OCI-LY7 (cell line): ENCODE measurements at regions of chr15 and their contacts with region 1.

Region 1: GRCh38 chr15:99704444-99704838 is 28.8 kb downstream of the LYSMD4 start:
- DNase-seq: peak; percentile 86
- H3K4me3 ChIP-seq: no peak overlapping the region
- H3K27ac ChIP-seq: no peak overlapping the region
- H3K4me1 ChIP-seq: peaks cover 9% of the 10 kb centered on the region
- CTCF ChIP-seq: peak; percentile 94

Region 2: GRCh38 chr15:98941595-98942255 is 762.7 kb before region 1 on chr15:
- CTCF ChIA-PET with region 1: no interaction called
- POLR2A ChIA-PET with region 1: no interaction called
- intact Hi-C with region 1: no loop called
- DNase-seq: no peak
- H3K4me3 ChIP-seq: no peak overlapping the region
- H3K27ac ChIP-seq: no peak overlapping the region
- H3K4me1 ChIP-seq: no peaks in the 10 kb centered on the region
- CTCF ChIP-seq: no peak

Region 3: DNA sequence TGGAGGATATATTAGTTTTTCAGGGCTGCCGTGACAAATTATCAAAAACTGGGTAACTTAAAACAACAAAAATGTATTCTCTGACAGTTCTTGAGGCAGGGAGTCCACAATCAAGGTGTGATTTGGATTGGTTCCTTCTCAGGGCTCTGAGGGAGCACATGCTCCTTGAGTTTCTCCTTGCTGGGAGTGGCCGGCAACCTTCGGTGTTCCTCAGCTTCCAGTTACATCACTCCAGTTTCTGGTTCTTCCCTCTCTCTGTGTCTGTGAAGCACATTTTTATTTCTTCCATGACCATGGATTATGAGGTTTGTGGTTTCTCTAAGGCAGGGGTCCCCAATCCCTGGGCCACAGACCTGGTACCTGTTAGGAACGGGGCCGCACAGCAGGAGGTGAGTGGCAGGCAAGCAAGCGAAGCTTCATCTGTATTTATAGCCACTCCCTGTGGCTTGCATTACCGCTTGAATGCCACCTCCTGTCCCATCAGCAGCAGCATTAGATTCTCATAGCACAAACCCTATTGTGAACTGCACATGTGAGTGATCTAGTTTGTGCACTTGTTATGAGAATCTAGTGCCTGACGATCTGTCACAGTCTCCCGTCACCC is 428.8 kb before region 1 on chr15:
- CTCF ChIA-PET with region 1: interaction called, 9 read pairs
- POLR2A ChIA-PET with region 1: interaction called, 3 read pairs
- intact Hi-C with region 1: loop called (anchors 1 kb)
- DNase-seq: no peak
- H3K4me3 ChIP-seq: no peak overlapping the region
- H3K27ac ChIP-seq: no peak overlapping the region
- H3K4me1 ChIP-seq: no peaks in the 10 kb centered on the region
- CTCF ChIP-seq: no peak

Region 4: DNA sequence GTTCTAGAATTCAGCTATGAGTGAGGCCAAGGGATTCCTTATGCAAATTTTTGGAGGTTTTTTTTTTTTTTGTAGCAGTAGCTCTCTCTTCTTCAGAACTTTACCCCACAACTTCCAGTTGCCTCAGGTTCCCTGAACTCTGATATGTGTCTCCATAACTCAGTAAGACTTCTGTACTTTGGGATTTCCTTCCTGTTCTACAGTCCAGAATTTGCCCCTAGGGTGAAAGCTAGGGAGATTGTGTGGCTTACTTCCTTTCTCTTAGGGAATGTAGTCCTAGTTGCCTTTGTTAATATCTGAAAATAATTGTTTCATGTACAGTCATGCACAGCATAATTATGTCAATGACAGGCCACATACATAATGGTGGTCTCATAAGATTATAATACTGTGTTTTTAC is 422.3 kb before region 1 on chr15:
- CTCF ChIA-PET with region 1: interaction called, 4 read pairs
- POLR2A ChIA-PET with region 1: interaction called, 4 read pairs
- intact Hi-C with region 1: loop called (anchors 2 kb)
- DNase-seq: no peak
- H3K4me3 ChIP-seq: no peak overlapping the region
- H3K27ac ChIP-seq: no peak overlapping the region
- H3K4me1 ChIP-seq: peaks cover 4% of the 10 kb centered on the region
- CTCF ChIP-seq: no peak

Region 5: DNA sequence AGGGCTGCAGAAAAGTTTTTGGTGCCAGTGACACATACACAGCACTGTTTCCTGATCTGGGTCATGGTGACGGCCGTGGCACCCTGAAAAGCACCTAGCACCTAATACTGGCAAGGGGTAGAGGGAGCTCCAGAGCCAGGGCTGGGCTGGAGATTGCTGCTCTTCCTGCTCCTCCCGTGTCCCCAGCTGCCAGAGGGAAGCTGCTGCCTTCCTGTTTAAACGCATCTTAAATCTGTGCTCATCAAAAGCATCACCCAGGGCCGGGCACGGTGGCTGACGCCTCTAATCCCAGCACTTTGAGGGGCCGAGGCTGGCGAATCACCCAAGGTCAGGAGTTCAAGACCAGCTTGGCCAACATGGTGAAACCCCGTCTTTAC is 295.4 kb before region 1 on chr15:
- CTCF ChIA-PET with region 1: no interaction called
- POLR2A ChIA-PET with region 1: no interaction called
- intact Hi-C with region 1: loop called (anchors 10 kb)
- DNase-seq: peak; percentile 21
- H3K4me3 ChIP-seq: no peak overlapping the region
- H3K27ac ChIP-seq: no peak overlapping the region
- H3K4me1 ChIP-seq: no peaks in the 10 kb centered on the region
- CTCF ChIP-seq: peak; percentile 48; the same call in 1 of the 2 replicates

Region 6: DNA sequence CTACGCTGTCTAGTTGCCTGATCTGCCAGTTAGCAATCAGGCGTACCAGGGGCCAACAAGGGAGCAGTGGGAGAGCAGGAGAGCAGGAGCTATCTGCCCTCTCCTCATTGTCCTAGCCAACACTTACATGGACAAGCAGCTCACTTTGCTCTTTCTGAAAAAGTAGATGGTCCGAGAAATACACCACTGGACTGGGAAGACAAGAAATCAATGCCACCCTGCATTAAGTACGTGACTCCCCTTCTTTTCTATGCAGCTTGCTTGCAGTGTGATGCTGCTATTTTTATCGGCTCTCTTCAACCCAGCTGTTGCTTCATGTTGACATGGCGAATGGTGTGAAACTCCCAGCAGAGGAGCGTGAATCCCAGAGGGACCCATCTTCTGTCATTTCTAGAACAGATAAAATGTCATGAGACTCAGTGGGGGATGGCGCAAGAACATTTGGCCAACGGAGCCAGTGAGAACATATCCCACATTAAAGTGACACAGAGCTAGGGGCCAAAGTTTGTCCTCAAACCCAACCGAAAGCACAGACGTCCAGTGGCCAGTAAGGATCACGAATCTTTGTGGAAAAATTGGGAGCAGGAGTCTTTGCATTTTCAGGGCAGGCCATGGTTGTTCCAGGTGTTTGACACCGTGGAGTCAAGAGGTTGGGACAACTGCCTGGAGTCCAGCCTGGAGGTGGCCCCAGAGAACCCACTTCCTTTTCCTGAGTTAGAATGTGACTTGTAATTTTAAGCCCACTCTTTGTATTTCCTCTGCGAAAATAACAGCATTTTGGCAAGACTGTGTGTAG is 192.4 kb before region 1 on chr15:
- CTCF ChIA-PET with region 1: no interaction called
- POLR2A ChIA-PET with region 1: no interaction called
- intact Hi-C with region 1: loop called (anchors 10 kb)
- DNase-seq: peak; percentile 92
- H3K4me3 ChIP-seq: peak overlapping the region; percentile 45
- H3K27ac ChIP-seq: peak overlapping the region; percentile 85
- H3K4me1 ChIP-seq: peaks cover 74% of the 10 kb centered on the region
- CTCF ChIP-seq: peak; percentile 39; the same call in 1 of the 2 replicates

Region 7: DNA sequence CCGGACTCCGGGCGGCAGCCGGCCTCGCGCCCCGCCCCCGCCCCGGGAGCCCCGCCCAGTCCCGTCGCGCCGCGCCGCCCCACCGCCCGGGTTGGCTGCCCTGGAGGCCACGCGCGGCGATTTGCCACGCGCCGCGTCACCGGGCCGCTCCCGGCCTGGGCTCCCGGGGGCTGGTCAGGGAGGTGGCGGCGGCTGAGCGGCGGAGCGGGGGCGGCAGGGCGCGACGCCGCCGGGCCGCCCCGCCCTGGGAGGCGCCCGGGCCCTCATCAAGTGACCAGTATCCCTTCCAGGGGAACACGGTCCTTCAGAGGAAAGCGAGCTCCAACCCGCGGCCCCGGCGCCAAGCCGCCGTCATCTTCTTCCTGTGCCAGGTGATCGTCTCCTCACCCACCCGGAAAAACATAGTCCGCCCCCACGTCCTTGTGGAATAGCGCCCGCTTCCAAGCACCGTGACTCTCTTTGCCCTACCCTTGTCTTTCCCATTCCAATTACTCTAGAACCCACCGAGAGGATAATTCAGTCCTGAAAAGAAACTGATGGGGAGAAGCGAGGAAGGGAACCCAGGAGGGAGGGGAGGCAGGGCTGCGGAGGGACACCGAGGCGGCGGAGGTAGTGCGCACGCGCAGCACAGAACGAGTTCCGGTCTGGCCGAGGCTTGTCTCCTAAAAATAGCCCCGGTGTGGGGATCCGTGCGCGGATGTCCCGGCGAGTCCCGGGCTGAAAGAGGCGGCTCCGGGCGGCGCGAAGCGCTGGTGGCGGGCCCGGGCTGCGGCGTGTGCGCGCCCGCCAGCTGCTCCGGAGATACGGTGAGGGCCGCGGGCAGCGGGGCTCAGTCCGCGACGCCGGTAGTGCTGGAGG is 138.9 kb before region 1 on chr15 and contains the start of gene MEF2A:
- CTCF ChIA-PET with region 1: no interaction called
- POLR2A ChIA-PET with region 1: interaction called, 4 read pairs
- intact Hi-C with region 1: loop called (anchors 2 kb)
- DNase-seq: peak; percentile 97
- H3K4me3 ChIP-seq: peak within 1 kb of the TSS; percentile 87
- H3K27ac ChIP-seq: peak within 1 kb of the TSS; percentile 70
- H3K4me1 ChIP-seq: peaks cover 29% of the 10 kb centered on the region
- CTCF ChIP-seq: no peak
- total RNA-seq, gene MEF2A: 27.3 and 28.0 TPM in 2 replicates